Activated CD8-positive, alpha-beta T cell treated with anti-CD3 and anti-CD28 coated beads, Interleukin-2, amount 10 ng/mL, durations not matched to agents 7 days and 5 days (primary cell): ENCODE measurements at regions of chr13 and their contacts with region 1.

Region 1: GRCh38 chr13:27826379-27827353 is 34.4 kb downstream of the GSX1 start:
- DNase-seq: peak; percentile 72
- ATAC-seq: peak; percentile 70
- H3K4me3 Mint-ChIP-seq: no peak overlapping the region
- H3K27ac Mint-ChIP-seq: no peak overlapping the region
- H3K4me1 Mint-ChIP-seq: peaks cover 12% of the 10 kb centered on the region
- H3K27me3 Mint-ChIP-seq: peaks cover 58% of the 10 kb centered on the region

Region 2: GRCh38 chr13:27374650-27375049 is 452.0 kb before region 1 on chr13:
- CTCF ChIA-PET with region 1: interaction called, 138 read pairs
- POLR2A ChIA-PET with region 1: no interaction called
- DNase-seq: peak; percentile 69
- ATAC-seq: peak; percentile 87
- H3K4me3 Mint-ChIP-seq: no peak overlapping the region
- H3K27ac Mint-ChIP-seq: no peak overlapping the region
- H3K4me1 Mint-ChIP-seq: peaks cover 9% of the 10 kb centered on the region
- H3K27me3 Mint-ChIP-seq: peaks cover 9% of the 10 kb centered on the region

Region 3: GRCh38 chr13:27533155-27533643 is 293.5 kb before region 1 on chr13:
- CTCF ChIA-PET with region 1: interaction called, 31 read pairs
- POLR2A ChIA-PET with region 1: no interaction called
- DNase-seq: peak; percentile 61
- ATAC-seq: peak; percentile 74
- H3K4me3 Mint-ChIP-seq: no peak overlapping the region
- H3K27ac Mint-ChIP-seq: no peak overlapping the region
- H3K4me1 Mint-ChIP-seq: peaks cover 7% of the 10 kb centered on the region
- H3K27me3 Mint-ChIP-seq: peaks cover 2% of the 10 kb centered on the region

Region 4: GRCh38 chr13:27613628-27614027 is 213.0 kb before region 1 on chr13:
- CTCF ChIA-PET with region 1: no interaction called
- POLR2A ChIA-PET with region 1: no interaction called
- DNase-seq: no peak
- ATAC-seq: no peak
- H3K4me3 Mint-ChIP-seq: no peak overlapping the region
- H3K27ac Mint-ChIP-seq: no peak overlapping the region
- H3K4me1 Mint-ChIP-seq: peaks cover 16% of the 10 kb centered on the region
- H3K27me3 Mint-ChIP-seq: no peaks in the 10 kb centered on the region

Region 5: GRCh38 chr13:27789495-27790303 is 37.0 kb before region 1 on chr13:
- CTCF ChIA-PET with region 1: interaction called, 20 read pairs
- POLR2A ChIA-PET with region 1: no interaction called
- DNase-seq: peak; percentile 38
- ATAC-seq: peak; percentile 35
- H3K4me3 Mint-ChIP-seq: peak overlapping the region; percentile 63
- H3K27ac Mint-ChIP-seq: peak overlapping the region; percentile 28
- H3K4me1 Mint-ChIP-seq: peaks cover 34% of the 10 kb centered on the region
- H3K27me3 Mint-ChIP-seq: peaks cover 64% of the 10 kb centered on the region

Region 6: GRCh38 chr13:27953676-27954405 is 127.2 kb after region 1 on chr13:
- CTCF ChIA-PET with region 1: interaction called, 53 read pairs
- POLR2A ChIA-PET with region 1: interaction called, 3 read pairs
- DNase-seq: peak; percentile 63
- ATAC-seq: peak; percentile 96
- H3K4me3 Mint-ChIP-seq: peak overlapping the region; percentile 69
- H3K27ac Mint-ChIP-seq: no peak overlapping the region
- H3K4me1 Mint-ChIP-seq: peaks cover 19% of the 10 kb centered on the region
- H3K27me3 Mint-ChIP-seq: peaks cover 54% of the 10 kb centered on the region